Activated CD4-positive, alpha-beta T cell treated with anti-CD3 and anti-CD28 coated beads, Interleukin-2, amount 10 ng/mL, durations not matched to agents 24 days and 14 days (primary cell): ENCODE measurements at regions of chr1 and their contacts with region 1.

Region 1: GRCh38 chr1:96845464-96845863 is 123.9 kb downstream of the PTBP2 start:
- DNase-seq: peak; percentile 80
- H3K4me3 Mint-ChIP-seq: no peak overlapping the region
- H3K27ac Mint-ChIP-seq: no peak overlapping the region
- H3K4me1 Mint-ChIP-seq: no peaks in the 10 kb centered on the region
- H3K27me3 Mint-ChIP-seq: no peaks in the 10 kb centered on the region

Region 2: GRCh38 chr1:96596226-96596922 is 249.1 kb before region 1 on chr1:
- intact Hi-C with region 1: loop called (anchors 10 kb)
- DNase-seq: peak; percentile 69
- H3K4me3 Mint-ChIP-seq: no peak overlapping the region
- H3K27ac Mint-ChIP-seq: no peak overlapping the region
- H3K4me1 Mint-ChIP-seq: no peaks in the 10 kb centered on the region
- H3K27me3 Mint-ChIP-seq: no peaks in the 10 kb centered on the region

Region 3: GRCh38 chr1:96804648-96805047 is 40.8 kb before region 1 on chr1:
- intact Hi-C with region 1: no loop called
- DNase-seq: no peak
- H3K4me3 Mint-ChIP-seq: no peak overlapping the region
- H3K27ac Mint-ChIP-seq: no peak overlapping the region
- H3K4me1 Mint-ChIP-seq: no peaks in the 10 kb centered on the region
- H3K27me3 Mint-ChIP-seq: no peaks in the 10 kb centered on the region